ENCODE measurements at regions of chr19 and their contacts with region 1.

Region 1: DNA sequence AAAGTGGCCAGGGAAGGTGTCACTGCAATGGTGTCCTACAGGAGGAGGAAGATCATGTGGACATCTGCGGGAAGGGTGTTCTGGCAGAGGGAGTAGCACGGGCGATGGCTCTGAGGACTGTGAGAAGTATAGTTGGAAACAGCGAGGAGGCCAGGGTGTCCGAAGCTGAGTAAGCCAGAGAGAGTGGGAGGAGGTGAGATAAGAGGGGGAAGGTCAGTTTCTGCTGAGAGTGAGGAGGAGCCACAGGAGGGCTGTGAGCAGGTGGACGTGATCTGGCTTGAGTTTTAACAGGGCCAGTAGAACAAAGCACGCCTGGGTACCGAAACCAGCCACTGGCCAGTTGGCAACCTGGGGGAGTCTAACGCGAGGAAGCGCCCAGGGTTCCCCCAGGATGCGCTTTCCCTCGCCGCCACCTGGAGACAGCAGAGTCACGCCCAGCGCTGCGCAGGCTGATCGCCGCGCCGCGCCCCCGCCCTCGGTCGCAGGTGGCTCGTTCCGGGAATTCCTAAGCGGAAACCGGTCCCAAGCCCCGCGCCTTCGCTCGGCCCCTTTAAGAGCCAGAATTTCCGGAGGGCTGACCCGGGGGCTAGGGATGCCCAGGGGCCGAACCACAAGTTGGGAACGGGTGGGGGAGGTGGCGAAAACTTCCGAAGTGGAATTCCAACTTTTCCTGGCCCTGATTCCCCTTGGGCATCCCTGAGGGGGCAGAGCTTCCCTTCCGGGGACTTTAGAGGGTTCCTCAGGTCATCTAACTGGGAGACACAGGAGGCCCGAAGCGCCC is 1.1 kb upstream of the LSR start:
- DNase-seq: peak in 1 of 10 donors; percentile 2
- H3K4me3 ChIP-seq: peak overlapping the region in 57 of 59 donors; percentile 6 to 64 (median 45)
- H3K27ac ChIP-seq: peak overlapping the region in 23 of 59 donors; percentile 1 to 78 (median 44)
- H3K27me3 ChIP-seq: peaks cover 0 to 57% (median 39%) of the 10 kb centered on the region in 45 donors
- CTCF ChIP-seq: peak in 31 of 56 donors; percentile 8 to 39 (median 24)

Region 2: DNA sequence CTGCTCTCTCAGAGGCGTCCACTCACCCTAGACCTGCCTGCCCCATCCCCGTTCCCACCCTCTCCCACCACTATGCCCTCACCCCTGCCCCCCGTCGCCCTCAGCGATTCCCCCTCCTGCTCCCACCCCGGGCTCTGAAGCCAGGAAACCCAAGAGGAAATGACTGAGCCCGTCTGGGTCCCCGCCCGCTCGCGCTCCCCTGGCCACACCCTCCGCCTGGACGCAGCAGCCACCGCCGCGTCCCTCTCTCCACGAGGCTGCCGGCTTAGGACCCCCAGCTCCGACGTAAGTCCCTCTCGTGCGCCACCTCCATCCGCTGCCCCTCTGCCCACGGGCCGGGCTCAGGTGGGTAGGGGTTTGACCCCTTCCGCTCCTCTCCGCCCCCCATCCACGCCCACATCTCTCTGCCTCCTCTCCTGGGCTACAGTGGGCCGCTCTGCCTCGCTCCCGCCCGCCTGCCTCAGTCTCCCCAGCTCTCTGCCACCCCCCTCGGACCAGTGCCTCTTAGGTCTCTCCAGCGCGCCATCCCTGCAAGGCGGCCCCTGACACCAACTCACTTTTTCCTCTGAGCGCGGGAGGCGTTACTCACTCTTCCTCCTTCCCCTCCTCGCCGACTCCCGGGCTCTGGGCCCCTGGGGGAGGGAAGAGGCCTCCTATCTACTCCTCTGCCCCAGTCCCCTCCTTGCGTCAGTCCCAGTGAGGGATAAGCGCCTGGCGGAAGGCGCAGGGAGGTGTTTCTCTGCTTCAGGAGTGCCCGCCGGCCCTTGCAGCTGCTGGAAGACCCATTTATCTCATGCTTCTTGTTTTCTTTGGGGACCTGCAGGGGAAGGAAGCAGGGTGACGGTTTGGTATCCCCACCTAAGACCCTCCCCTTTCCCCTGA is 93.0 kb before region 1 on chr19 and contains the start of gene FXYD5:
- intact Hi-C with region 1: loop called in 1 of 2 experiments (anchors 5 kb)
- DNase-seq: no peak
- H3K4me3 ChIP-seq: peak within 1 kb of the TSS; percentile 1 to 68 (median 48)
- H3K27ac ChIP-seq: peak within 1 kb of the TSS in 19 of 59 donors; percentile 14 to 76 (median 41)
- H3K27me3 ChIP-seq: peaks cover 0 to 26% (median 7%) of the 10 kb centered on the region in 45 donors
- CTCF ChIP-seq: no peak
- total RNA-seq, gene FXYD5: 5.8 to 36.4 (median 14.0) TPM

Region 3: GRCh38 chr19:35170156-35171020 is 77.3 kb before region 1 on chr19:
- intact Hi-C with region 1: loop called in 1 of 2 experiments (anchors 5 kb)
- DNase-seq: no peak
- H3K4me3 ChIP-seq: no peak overlapping the region
- H3K27ac ChIP-seq: peak overlapping the region in 1 of 59 donors; percentile 22
- H3K27me3 ChIP-seq: no peaks in the 10 kb centered on the region
- CTCF ChIP-seq: no peak

Region 4: DNA sequence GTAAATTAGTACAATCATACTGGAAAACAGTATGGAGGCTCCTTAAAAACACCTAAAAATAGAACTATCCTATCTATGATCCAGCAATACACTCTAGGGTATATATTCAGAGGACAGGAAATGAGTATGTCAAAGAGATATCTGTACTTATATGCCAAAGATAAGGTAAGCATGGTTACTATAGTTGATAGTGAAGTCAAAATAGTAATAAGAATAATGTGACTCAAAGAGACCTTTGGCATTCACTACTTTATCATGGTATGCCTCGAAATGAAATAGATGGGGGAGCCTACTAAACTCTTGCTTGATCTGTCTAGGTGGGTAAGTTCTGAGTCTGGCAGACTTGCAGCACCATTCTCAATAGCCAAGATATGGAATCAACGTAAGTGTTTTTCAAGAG is 62.8 kb before region 1 on chr19:
- intact Hi-C with region 1: no loop called
- DNase-seq: no peak
- H3K4me3 ChIP-seq: no peak overlapping the region
- H3K27ac ChIP-seq: no peak overlapping the region
- H3K27me3 ChIP-seq: peaks cover 0 to 3% (median 0%) of the 10 kb centered on the region in 45 donors
- CTCF ChIP-seq: no peak